ENCODE measurements at regions of chr12 and their contacts with region 1.

Region 1: DNA sequence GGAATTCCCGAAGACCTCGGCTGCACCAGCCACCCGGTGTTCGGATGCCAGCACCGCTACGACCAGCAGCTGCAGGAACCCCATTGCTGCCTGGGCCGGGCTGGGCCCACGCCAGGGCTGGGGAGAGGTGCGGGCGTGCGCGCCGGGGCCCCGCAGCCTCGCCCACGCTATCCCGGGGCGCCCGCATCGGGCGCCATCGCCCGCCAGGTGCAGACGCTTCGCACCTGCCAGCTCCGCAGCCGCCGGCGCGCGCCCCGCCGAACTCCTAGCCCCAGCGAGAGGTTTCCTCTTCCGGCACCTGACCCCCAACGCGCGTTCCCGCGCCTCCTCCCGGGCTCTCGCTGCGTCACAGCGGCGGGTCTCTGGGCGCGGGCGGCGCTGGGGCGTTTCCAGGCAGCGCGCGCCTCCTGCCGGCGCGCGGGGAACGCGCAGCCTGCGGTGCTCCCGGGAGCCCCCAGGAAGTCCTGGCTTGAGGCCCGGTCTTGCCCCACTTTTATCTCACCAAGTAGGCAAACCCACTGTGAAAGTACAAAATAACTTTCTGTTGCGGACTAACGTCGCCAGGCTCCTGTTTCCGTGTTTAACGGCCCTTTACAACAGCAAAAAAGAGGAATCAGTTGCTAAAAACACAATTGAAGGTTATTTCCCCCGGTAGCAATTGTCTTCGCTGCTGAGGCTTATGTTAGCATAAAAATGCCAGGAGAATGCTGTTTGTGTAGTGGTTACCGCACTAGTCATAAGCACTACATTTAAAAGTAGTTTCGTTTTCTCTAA is at the start of gene TM7SF3:
- DNase-seq: peak; percentile 96
- H3K4me3 ChIP-seq: peak within 1 kb of the TSS; percentile 91
- H3K27ac ChIP-seq: peak within 1 kb of the TSS; percentile 85
- H3K4me1 ChIP-seq: peaks cover 18% of the 10 kb centered on the region
- H3K27me3 ChIP-seq: no peaks in the 10 kb centered on the region
- total RNA-seq, gene TM7SF3: 51.8 and 103 TPM in 2 replicates

Region 2: DNA sequence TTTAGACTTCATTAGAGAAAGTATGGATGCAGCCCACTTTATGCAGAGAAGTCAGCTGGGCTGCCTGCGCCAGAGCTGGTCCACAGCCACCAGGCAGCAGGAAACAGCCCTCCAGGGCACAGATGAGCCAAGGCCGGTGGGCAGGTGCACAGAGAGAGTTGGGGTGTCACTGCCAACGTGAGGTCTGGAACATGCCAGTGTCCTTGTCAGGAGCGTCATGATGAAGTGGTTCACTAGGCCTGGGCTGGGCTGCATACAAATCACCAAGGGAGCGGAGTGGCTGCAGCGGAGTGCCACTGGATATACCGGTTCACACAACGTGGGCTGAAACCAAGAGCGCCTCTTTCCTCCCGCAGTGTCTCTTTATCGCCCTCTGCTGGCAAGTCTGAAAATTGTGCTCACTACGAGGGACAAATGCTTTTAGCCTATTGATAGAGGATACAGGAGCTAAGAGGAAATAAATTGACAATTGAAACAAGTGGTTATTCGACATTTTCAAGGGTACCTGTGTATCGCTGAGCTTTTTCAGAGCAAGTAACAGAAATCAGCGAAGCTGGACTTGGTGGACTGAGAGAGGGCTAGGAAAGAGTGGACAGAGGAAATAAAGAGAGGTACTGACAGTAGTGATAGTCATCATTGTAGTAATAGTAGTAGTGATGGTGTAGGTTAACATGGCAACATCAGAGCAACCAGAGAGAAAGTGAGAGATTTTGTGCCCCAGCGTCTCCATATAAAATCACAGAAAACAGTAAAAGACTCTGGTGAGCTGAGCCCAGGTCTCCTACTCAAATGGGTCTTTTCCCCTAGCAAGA is 129.3 kb before region 1 on chr12:
- in situ Hi-C with region 1: no loop called
- DNase-seq: peak; percentile 83
- H3K4me3 ChIP-seq: no peak overlapping the region
- H3K27ac ChIP-seq: no peak overlapping the region
- H3K4me1 ChIP-seq: no peaks in the 10 kb centered on the region
- H3K27me3 ChIP-seq: no peaks in the 10 kb centered on the region; the same call in 1 of the 2 replicates

Region 3: DNA sequence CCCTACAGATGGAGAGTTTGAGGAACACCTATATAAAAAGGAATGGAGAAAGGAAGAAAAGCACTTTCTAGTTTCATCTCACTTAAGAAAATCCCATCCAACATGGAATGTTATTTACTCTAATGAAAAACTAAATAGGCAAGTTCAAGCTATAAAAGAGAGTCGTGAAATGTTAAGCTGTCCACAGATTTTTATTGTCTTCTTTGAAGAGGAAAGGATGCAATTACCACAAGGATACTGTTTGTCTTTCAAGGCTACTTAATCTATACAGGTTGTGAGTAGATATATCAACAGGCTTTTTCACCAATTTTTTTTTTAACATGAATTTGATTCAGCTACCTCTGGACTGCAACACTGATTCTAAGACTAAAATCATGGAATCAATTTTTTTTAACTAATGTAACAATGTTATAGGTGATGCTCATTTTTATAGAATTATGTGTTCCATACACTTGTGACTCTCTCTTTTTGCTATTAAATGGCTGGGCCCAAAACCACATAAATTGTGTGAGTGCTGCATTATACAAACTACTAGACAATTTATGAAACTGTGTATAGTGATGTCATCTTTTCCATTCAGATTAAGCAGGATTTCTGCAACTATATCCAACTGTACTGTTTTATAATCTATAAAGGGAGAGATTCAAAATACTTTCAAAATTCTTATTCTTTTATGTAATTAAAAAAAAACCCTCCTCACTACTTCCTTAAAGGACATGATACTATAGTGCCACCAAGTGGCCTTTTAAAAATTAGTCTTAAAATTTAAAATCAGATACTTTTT is 291.6 kb after region 1 on chr12:
- in situ Hi-C with region 1: loop called (anchors 10 kb)
- DNase-seq: peak; percentile 68
- H3K4me3 ChIP-seq: no peak overlapping the region
- H3K27ac ChIP-seq: no peak overlapping the region
- H3K4me1 ChIP-seq: no peaks in the 10 kb centered on the region
- H3K27me3 ChIP-seq: no peaks in the 10 kb centered on the region